WTC11 (cell line): ENCODE measurements at regions of chr11 and their contacts with region 1.

Region 1: GRCh38 chr11:126480410-126481302 is 125.2 kb downstream of the ST3GAL4 start:
- DNase-seq: peak; percentile 77
- ATAC-seq: peak; percentile 80
- H3K4me3 Mint-ChIP-seq: peak overlapping the region; percentile 34; the same call in 1 of the 2 replicates
- H3K27ac Mint-ChIP-seq: peak overlapping the region; percentile 81; the same call in 1 of the 2 replicates
- H3K4me1 Mint-ChIP-seq: peaks cover 11% of the 10 kb centered on the region
- H3K27me3 Mint-ChIP-seq: no peaks in the 10 kb centered on the region
- CTCF ChIP-seq: peak; percentile 92

Region 2: GRCh38 chr11:126282736-126283591 is 197.7 kb before region 1 on chr11 and contains the start of gene TIRAP:
- CTCF ChIA-PET with region 1: no interaction called
- POLR2A ChIA-PET with region 1: no interaction called
- DNase-seq: peak; percentile 44
- ATAC-seq: peak; percentile 57
- H3K4me3 Mint-ChIP-seq: peak within 1 kb of the TSS; percentile 96
- H3K27ac Mint-ChIP-seq: peak within 1 kb of the TSS; percentile 83; the same call in 1 of the 2 replicates
- H3K4me1 Mint-ChIP-seq: peaks cover 14% of the 10 kb centered on the region
- H3K27me3 Mint-ChIP-seq: peaks cover 30% of the 10 kb centered on the region
- CTCF ChIP-seq: no peak
- total RNA-seq, gene TIRAP: 5.4 to 5.9 TPM (median 5.6 TPM) in 3 replicates

Region 3: DNA sequence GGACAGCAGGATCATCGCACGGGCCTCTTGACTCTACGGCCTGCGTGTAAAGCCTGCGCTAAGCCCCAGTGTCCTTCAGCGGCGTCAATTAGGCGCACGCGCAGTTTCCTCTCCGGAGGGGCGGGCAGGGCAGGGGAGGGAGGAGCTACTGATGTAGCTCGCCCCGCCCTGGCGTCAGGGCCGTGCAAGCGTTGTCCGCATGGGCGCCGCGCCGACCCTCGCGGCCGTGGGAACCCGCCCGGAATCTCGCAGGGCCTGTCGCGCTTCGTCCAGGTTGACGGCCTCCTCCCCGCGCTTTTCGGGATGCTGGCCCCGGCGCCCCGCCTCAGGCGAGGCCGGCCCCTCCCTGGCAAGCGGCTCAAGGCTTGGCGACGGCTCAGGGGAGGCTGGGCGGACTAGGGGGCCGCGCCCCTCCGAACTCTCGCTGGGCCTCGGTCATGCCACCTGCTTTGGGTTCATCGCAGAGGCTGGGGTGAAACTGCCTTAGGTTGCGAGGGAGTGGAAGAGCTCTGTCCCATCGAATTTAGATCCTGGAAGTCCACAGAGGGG is 64.0 kb before region 1 on chr11:
- CTCF ChIA-PET with region 1: interaction called, 10 read pairs
- POLR2A ChIA-PET with region 1: no interaction called
- DNase-seq: peak; percentile 83
- ATAC-seq: peak; percentile 97
- H3K4me3 Mint-ChIP-seq: peak overlapping the region; percentile 50
- H3K27ac Mint-ChIP-seq: no peak overlapping the region
- H3K4me1 Mint-ChIP-seq: peaks cover 14% of the 10 kb centered on the region
- H3K27me3 Mint-ChIP-seq: peaks cover 8% of the 10 kb centered on the region
- CTCF ChIP-seq: no peak

Region 4: GRCh38 chr11:126459691-126460281 is 20.9 kb before region 1 on chr11:
- CTCF ChIA-PET with region 1: interaction called, 59 read pairs
- POLR2A ChIA-PET with region 1: no interaction called
- DNase-seq: no peak
- ATAC-seq: no peak
- H3K4me3 Mint-ChIP-seq: no peak overlapping the region
- H3K27ac Mint-ChIP-seq: no peak overlapping the region
- H3K4me1 Mint-ChIP-seq: peaks cover 9% of the 10 kb centered on the region
- H3K27me3 Mint-ChIP-seq: no peaks in the 10 kb centered on the region
- CTCF ChIP-seq: no peak

Region 5: GRCh38 chr11:126514061-126514693 is 33.5 kb after region 1 on chr11:
- CTCF ChIA-PET with region 1: interaction called, 12 read pairs
- POLR2A ChIA-PET with region 1: no interaction called
- DNase-seq: no peak
- ATAC-seq: no peak
- H3K4me3 Mint-ChIP-seq: no peak overlapping the region
- H3K27ac Mint-ChIP-seq: no peak overlapping the region
- H3K4me1 Mint-ChIP-seq: peaks cover 5% of the 10 kb centered on the region; the same call in 1 of the 2 replicates
- H3K27me3 Mint-ChIP-seq: no peaks in the 10 kb centered on the region; the same call in 1 of the 2 replicates
- CTCF ChIP-seq: no peak

Region 6: DNA sequence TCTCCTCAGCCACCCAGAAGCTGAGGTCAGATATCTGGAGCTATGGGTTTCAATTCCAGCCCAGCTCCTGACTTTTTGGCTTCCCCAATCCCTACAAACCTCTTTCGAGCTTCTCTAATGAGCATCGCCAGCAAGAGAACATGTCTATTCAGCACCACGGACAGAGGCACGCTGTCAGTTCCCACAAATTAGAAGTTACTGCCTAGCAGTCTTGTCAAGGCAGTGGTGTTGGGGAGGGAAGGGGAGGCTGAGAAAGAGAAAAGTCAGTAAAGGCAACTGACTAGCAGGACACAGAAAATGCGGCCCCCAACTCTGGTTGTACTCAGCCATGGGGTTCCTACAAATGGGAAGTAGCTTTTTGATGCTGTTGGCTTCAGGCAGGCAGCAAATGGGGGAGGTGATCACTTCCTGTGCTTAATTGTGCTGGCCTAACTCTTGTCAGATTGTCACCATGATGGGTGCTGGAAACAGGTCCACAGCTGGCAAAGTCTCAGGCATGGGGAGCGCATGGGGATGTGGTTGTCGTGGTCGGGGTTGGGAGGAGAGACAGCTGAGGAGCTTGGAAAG is 80.8 kb after region 1 on chr11:
- CTCF ChIA-PET with region 1: interaction called, 17 read pairs
- POLR2A ChIA-PET with region 1: no interaction called
- DNase-seq: peak; percentile 80
- ATAC-seq: peak; percentile 57
- H3K4me3 Mint-ChIP-seq: no peak overlapping the region
- H3K27ac Mint-ChIP-seq: no peak overlapping the region
- H3K4me1 Mint-ChIP-seq: peaks cover 33% of the 10 kb centered on the region
- H3K27me3 Mint-ChIP-seq: peaks cover 35% of the 10 kb centered on the region
- CTCF ChIP-seq: no peak

Region 7: GRCh38 chr11:126989942-126990715 is 509.5 kb after region 1 on chr11:
- CTCF ChIA-PET with region 1: interaction called, 14 read pairs
- POLR2A ChIA-PET with region 1: no interaction called
- DNase-seq: peak; percentile 94
- ATAC-seq: peak; percentile 99
- H3K4me3 Mint-ChIP-seq: peak overlapping the region; percentile 8; the same call in 1 of the 2 replicates
- H3K27ac Mint-ChIP-seq: no peak overlapping the region
- H3K4me1 Mint-ChIP-seq: peaks cover 9% of the 10 kb centered on the region; the same call in 1 of the 2 replicates
- H3K27me3 Mint-ChIP-seq: no peaks in the 10 kb centered on the region; the same call in none of the 2 replicates
- CTCF ChIP-seq: peak; percentile 92